ENCODE measurements at regions of chr17 and their contacts with region 1.

Region 1: GRCh38 chr17:64411999-64412771 is 21.5 kb upstream of the PECAM1 start:
- DNase-seq: peak; percentile 62 to 80 (median 78)
- H3K4me3 ChIP-seq: peak overlapping the region in 2 of 3 donors; percentile 21 to 32
- H3K27ac ChIP-seq: no peak overlapping the region
- H3K4me1 ChIP-seq: peaks cover 0 to 3% (median 3%) of the 10 kb centered on the region in 3 donors
- H3K27me3 ChIP-seq: no peaks in the 10 kb centered on the region
- CTCF ChIP-seq: no peak

Region 2: DNA sequence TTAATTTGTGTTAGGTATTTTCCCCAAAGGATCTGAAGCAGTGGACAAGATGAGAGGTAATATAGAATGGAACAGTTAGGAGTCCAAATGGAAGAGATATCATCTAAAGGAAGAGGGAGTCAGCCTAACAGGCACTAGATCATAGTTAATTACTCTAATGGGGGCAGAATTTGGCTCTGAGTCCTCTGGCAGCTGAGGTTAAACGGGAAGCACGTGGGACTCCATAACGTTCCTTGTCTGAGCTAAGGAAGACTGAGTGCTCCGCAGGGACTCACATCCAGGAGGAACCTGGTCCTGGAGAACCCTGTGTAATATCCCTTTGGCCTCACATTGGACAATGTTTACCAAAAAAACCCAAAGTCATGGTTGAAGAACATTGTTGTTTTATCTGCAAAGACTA is 102.5 kb before region 1 on chr17:
- intact Hi-C with region 1: loop called (anchors 5 kb)
- DNase-seq: no peak
- H3K4me3 ChIP-seq: no peak overlapping the region
- H3K27ac ChIP-seq: no peak overlapping the region
- H3K4me1 ChIP-seq: no peaks in the 10 kb centered on the region
- H3K27me3 ChIP-seq: no peaks in the 10 kb centered on the region
- CTCF ChIP-seq: no peak